ENCODE measurements at regions of chr11 and their contacts with region 1.

Region 1: DNA sequence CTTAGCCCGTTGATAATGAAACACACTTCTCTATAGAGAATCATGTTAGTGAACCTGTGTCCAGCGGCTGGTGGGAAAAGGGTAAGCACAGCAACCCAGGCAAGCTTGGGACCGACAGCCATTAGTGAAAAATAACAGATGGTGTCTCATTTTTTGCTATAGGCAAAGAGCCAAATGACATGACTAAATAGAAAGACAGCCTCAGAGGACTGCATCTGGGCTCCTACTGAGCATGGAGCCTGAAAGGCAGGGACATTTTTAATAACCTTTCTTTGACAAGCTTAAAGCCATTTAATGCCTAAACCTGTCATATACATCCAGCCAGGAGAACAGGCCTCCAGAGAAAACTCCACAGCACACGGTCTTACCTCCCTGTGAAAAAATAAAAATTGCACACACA is 67.0 kb downstream of the FANCF start:
- DNase-seq: no peak
- H3K4me3 ChIP-seq: no peak overlapping the region
- CTCF ChIP-seq: no peak

Region 2: GRCh38 chr11:22795914-22796313 is 237.2 kb after region 1 on chr11:
- in situ Hi-C with region 1: loop called (anchors 5 kb)
- DNase-seq: no peak
- H3K4me3 ChIP-seq: no peak overlapping the region
- CTCF ChIP-seq: no peak